MCF 10A (cell line): ENCODE measurements at regions of chr11 and their contacts with region 1.

Region 1: DNA sequence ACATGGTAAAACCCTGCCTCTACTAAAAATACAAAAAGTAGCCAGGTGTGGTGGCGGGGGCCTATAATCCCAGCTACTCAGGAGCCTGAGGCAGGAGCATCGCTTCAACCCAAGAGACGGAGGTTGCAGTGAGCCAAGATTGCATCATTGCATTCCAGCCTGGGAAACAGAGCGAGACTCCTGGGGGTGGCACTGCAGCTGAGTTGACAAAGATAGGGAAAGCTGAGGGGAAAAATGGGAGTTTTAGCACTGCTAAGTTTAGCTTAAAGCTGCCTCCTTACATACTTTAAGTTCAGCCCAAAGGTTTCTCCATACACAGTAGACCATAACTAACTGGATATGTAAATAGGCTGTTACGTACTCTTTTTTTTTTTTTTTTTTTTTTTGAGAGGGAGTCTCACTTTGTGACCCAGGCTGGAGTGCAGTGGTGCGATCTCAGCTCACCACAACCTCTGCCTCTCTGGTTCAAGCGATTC is 9.0 kb upstream of the USP28 start:
- DNase-seq: peak; percentile 51
- H3K4me3 Mint-ChIP-seq: no peak overlapping the region
- H3K27ac Mint-ChIP-seq: no peak overlapping the region
- H3K4me1 Mint-ChIP-seq: peaks cover 6% of the 10 kb centered on the region
- H3K27me3 Mint-ChIP-seq: no peaks in the 10 kb centered on the region
- CTCF ChIP-seq: no peak

Region 2: GRCh38 chr11:113839842-113840241 is 44.6 kb before region 1 on chr11:
- CTCF ChIA-PET with region 1: no interaction called
- POLR2A ChIA-PET with region 1: no interaction called
- intact Hi-C with region 1: no loop called
- DNase-seq: no peak
- H3K4me3 Mint-ChIP-seq: no peak overlapping the region
- H3K27ac Mint-ChIP-seq: no peak overlapping the region
- H3K4me1 Mint-ChIP-seq: no peaks in the 10 kb centered on the region
- H3K27me3 Mint-ChIP-seq: no peaks in the 10 kb centered on the region
- CTCF ChIP-seq: no peak

Region 3: GRCh38 chr11:113896156-113896879 is 11.9 kb after region 1 on chr11:
- CTCF ChIA-PET with region 1: interaction called, 28 read pairs
- POLR2A ChIA-PET with region 1: interaction called, 5 read pairs
- intact Hi-C with region 1: no loop called
- DNase-seq: peak; percentile 42
- H3K4me3 Mint-ChIP-seq: no peak overlapping the region
- H3K27ac Mint-ChIP-seq: no peak overlapping the region
- H3K4me1 Mint-ChIP-seq: no peaks in the 10 kb centered on the region
- H3K27me3 Mint-ChIP-seq: peaks cover 8% of the 10 kb centered on the region
- CTCF ChIP-seq: peak; percentile 68